A549 (cell line): ENCODE measurements at regions of chr19 and their contacts with region 1.

Region 1: GRCh38 chr19:44988896-44989556 is 12.2 kb upstream of the RELB start:
- DNase-seq: peak; percentile 75 to 85
- ATAC-seq: peak; percentile 60 to 83
- H3K4me3 ChIP-seq: no peak overlapping the region
- H3K27ac ChIP-seq: no peak overlapping the region
- H3K4me1 ChIP-seq: no peaks in the 10 kb centered on the region
- CTCF ChIP-seq: peak; percentile 62
- EP300 ChIP-seq: no peak
- POLR2A ChIP-seq: no peak
- RAD21 ChIP-seq: peak; percentile 44 to 47; a peak in 3 of 5 replicates

Region 2: DNA sequence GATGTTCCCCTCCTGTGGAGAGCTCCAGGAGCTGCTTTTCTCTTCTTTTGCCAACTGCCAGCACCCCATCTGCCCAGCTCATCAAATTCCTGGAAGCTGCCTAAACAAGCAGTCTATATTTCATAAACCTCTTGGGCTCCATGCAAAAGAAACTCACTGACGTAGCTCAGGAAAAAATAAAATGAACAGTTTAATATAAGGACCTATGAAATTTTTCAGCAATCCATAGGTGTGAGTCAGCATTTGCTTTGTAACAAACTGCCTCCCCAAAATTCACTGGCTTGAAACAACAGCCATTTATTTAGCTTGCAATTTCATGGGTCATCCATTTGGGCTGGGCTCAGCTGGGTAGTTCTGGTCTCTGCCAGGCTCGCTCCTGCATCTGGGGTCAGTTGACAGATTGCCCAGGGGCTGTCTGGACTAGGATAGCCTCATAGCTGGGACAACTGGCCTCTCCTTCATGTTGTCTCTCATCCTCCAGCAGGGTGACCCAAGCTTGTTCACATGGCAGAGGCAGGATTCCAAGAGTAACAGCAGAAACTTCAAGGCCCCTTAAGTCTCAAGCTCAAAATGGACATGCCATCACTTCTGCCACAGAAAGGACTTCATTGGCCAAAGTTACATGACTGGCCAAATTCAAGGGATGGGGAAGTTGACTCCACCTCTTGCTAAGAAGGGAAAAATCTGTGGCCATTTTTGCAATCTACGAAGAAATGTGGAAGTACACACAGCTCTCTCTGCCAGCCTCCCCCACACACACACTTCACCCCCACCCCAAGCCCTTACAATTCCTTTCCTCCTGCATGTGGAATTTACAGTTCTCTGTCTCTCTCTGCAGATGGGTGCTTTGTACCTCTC is 353.2 kb before region 1 on chr19:
- CTCF ChIA-PET with region 1: no interaction called
- POLR2A ChIA-PET with region 1: no interaction called
- DNase-seq: no peak
- ATAC-seq: peak; percentile 47 to 57; a peak in 5 of 6 replicates
- H3K4me3 ChIP-seq: no peak overlapping the region
- H3K27ac ChIP-seq: peak overlapping the region; percentile 84 to 97
- H3K4me1 ChIP-seq: peaks cover 60% of the 10 kb centered on the region
- CTCF ChIP-seq: no peak
- EP300 ChIP-seq: no peak
- POLR2A ChIP-seq: no peak
- RAD21 ChIP-seq: no peak

Region 3: DNA sequence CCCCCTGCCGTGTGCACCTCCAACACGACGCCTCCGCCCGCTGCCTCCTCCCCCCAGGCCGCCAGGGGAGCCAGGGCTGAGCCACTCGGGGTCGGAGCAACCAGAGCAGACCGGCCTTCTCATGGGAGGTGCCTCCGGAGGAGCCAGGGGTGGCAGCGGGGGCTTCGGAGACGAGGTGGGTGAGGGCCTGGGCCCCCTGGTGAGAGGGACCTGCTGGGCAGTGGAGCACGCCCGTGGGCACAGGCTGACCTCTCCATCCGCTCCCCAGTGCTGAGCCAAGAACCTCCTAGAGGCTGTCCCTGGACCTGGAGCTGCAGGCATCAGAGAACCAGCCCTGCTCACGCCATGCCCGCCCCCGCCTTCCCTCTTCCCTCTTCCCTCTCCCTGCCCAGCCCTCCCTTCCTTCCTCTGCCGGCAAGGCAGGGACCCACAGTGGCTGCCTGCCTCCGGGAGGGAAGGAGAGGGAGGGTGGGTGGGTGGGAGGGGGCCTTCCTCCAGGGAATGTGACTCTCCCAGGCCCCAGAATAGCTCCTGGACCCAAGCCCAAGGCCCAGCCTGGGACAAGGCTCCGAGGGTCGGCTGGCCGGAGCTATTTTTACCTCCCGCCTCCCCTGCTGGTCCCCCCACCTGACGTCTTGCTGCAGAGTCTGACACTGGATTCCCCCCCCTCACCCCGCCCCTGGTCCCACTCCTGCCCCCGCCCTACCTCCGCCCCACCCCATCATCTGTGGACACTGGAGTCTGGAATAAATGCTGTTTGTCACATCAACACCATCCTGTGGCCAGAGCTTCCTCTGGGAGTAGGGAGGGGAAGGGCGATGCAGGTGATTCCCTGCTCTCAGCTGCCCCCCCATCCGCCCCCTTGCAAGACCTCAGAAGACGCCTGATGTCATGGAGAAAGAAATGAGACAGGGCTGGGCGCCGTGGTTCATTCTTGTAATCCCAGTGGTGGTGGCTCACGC is 168.1 kb before region 1 on chr19:
- CTCF ChIA-PET with region 1: no interaction called
- POLR2A ChIA-PET with region 1: no interaction called
- DNase-seq: no peak
- ATAC-seq: peak in 1 of 2 experiments; percentile 38; a peak in 3 of 6 replicates
- H3K4me3 ChIP-seq: no peak overlapping the region
- H3K27ac ChIP-seq: no peak overlapping the region
- H3K4me1 ChIP-seq: peaks cover 12% of the 10 kb centered on the region; the same call in 2 of the 3 replicates
- CTCF ChIP-seq: no peak
- EP300 ChIP-seq: no peak
- POLR2A ChIP-seq: no peak
- RAD21 ChIP-seq: no peak

Region 4: GRCh38 chr19:44845612-44846454 is 143.2 kb before region 1 on chr19 and contains the start of gene NECTIN2:
- CTCF ChIA-PET with region 1: no interaction called
- POLR2A ChIA-PET with region 1: no interaction called
- DNase-seq: peak; percentile 99 to 100
- ATAC-seq: peak; percentile 67 to 73
- H3K4me3 ChIP-seq: peak within 1 kb of the TSS; percentile 97
- H3K27ac ChIP-seq: peak within 1 kb of the TSS; percentile 94 to 95
- H3K4me1 ChIP-seq: peaks cover 37% of the 10 kb centered on the region
- CTCF ChIP-seq: peak; percentile 96
- EP300 ChIP-seq: no peak
- POLR2A ChIP-seq: peak; percentile 63
- RAD21 ChIP-seq: peak; percentile 73 to 75
- polyA plus RNA-seq, gene NECTIN2: 69.4 and 84.8 TPM in 2 replicates

Region 5: DNA sequence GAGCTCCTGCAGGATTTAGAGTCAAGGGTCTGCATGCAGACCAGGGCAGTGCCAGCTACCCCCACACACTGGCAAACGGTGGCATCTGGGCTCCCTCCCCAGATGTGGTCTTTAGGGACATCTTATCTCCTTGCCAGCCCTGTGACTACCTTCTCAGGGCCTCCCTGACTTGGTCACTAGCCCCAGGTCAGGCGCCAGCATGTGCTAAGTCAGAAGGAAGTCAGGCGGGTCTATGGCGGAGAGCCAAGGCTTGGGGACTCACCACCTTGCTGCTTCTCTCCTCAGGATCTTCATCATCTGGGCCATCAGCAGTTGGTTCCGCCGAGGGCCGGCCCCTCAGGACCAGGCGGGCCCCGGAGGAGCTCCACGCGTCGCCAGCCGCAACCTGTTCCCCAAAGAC is 16.2 kb before region 1 on chr19:
- CTCF ChIA-PET with region 1: interaction called, 31 read pairs
- POLR2A ChIA-PET with region 1: no interaction called
- DNase-seq: no peak
- ATAC-seq: no peak
- H3K4me3 ChIP-seq: no peak overlapping the region
- H3K27ac ChIP-seq: no peak overlapping the region
- H3K4me1 ChIP-seq: no peaks in the 10 kb centered on the region
- CTCF ChIP-seq: no peak
- EP300 ChIP-seq: no peak
- POLR2A ChIP-seq: no peak
- RAD21 ChIP-seq: no peak

Region 6: DNA sequence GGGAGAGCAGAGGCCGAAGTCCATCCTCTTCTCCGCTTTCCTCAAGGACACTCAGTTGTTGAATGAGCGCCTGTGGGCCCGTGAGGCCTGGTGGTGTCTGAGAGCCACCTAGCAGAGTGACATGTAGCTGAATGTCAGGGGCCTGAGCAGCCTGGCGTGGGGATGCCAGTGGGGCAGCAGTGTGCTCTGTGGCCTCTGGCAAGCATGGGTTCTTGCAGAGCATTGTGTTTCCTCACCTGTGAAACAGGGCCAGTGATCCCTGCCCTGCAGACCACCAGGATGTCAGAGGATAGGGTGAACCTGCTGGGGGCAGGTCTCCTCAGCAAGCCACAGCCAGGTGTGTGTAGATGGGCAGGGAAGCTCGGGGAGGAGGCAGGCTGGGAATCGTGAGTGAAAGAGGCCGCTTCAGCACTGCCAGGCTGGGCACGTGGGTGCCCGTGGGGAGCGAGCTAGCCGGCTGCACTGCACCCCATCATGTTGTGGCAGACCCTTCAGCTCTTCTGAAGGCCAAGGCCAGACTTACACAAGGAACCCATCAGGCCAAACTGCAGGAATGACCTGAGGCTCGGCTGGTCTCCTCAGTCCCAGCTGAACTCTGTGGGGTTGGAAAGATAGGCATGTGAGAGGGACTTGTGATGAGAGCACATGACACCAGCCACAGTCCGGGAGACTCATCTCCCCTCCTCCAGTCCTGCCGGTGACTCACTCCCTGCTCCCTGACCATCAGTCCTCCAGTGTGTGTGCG is 108.9 kb after region 1 on chr19:
- CTCF ChIA-PET with region 1: no interaction called
- POLR2A ChIA-PET with region 1: no interaction called
- DNase-seq: peak; percentile 83 to 95
- ATAC-seq: peak; percentile 85 to 87
- H3K4me3 ChIP-seq: no peak overlapping the region
- H3K27ac ChIP-seq: peak overlapping the region; percentile 78 to 92
- H3K4me1 ChIP-seq: peaks cover 60% of the 10 kb centered on the region
- CTCF ChIP-seq: no peak
- EP300 ChIP-seq: no peak
- POLR2A ChIP-seq: no peak
- RAD21 ChIP-seq: no peak